HepG2 (cell line): ENCODE measurements at regions of chr12 and their contacts with region 1.

Region 1: GRCh38 chr12:7638760-7639555 is 26.8 kb downstream of the APOBEC1 start:
- DNase-seq: peak; percentile 73
- ATAC-seq: peak; percentile 93
- H3K4me3 ChIP-seq: no peak overlapping the region
- H3K27ac ChIP-seq: no peak overlapping the region
- H3K4me1 ChIP-seq: peaks cover 26% of the 10 kb centered on the region
- H3K27me3 ChIP-seq: peaks cover 0 to 8% of the 10 kb centered on the region in 2 experiments; a peak in 2 of 5 replicates
- CTCF ChIP-seq: peak; percentile 88
- EP300 ChIP-seq: no peak
- POLR2A ChIP-seq: no peak
- RAD21 ChIP-seq: peak; percentile 85

Region 2: DNA sequence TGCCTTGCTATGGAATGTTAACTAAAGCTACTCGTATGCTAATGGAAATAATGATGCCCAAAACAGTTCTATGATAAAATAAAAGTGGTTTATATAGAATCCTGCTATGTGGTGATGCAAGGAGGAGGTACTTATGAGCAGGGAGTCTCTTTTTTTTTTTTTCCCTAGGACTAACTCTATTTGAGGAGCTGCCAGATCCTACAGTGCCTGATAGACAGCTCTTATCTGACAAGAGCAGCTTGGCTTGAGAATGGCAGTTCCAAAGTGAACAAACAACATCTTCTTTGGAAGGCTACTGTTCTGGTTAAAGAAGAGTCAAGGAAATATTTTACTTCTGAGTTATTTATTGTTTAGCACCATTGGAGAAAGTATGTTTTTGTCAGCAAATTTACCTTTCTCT is 345.3 kb before region 1 on chr12:
- CTCF ChIA-PET with region 1: no interaction called
- POLR2A ChIA-PET with region 1: no interaction called
- in situ Hi-C with region 1: no loop called
- intact Hi-C with region 1: no loop called
- DNase-seq: no peak
- ATAC-seq: no peak
- H3K4me3 ChIP-seq: no peak overlapping the region
- H3K27ac ChIP-seq: no peak overlapping the region
- H3K4me1 ChIP-seq: no peaks in the 10 kb centered on the region
- H3K27me3 ChIP-seq: peaks cover 0 to 9% of the 10 kb centered on the region in 2 experiments; a peak in 1 of 5 replicates
- CTCF ChIP-seq: no peak
- EP300 ChIP-seq: no peak
- POLR2A ChIP-seq: no peak
- RAD21 ChIP-seq: no peak

Region 3: GRCh38 chr12:7374423-7375144 is 264.4 kb before region 1 on chr12:
- CTCF ChIA-PET with region 1: interaction called, 7 read pairs
- POLR2A ChIA-PET with region 1: no interaction called
- in situ Hi-C with region 1: loop called (anchors 10 kb)
- intact Hi-C with region 1: loop called (anchors 1 kb)
- DNase-seq: peak; percentile 80
- ATAC-seq: peak; percentile 99
- H3K4me3 ChIP-seq: no peak overlapping the region
- H3K27ac ChIP-seq: no peak overlapping the region
- H3K4me1 ChIP-seq: peaks cover 13% of the 10 kb centered on the region
- H3K27me3 ChIP-seq: no peaks in the 10 kb centered on the region; a peak in 1 of 5 replicates
- CTCF ChIP-seq: peak; percentile 93
- EP300 ChIP-seq: no peak
- POLR2A ChIP-seq: no peak
- RAD21 ChIP-seq: peak; percentile 62

Region 4: GRCh38 chr12:7460375-7461259 is 178.3 kb before region 1 on chr12:
- CTCF ChIA-PET with region 1: interaction called, 3 read pairs
- POLR2A ChIA-PET with region 1: no interaction called
- in situ Hi-C with region 1: no loop called
- intact Hi-C with region 1: loop called (anchors 5 kb)
- DNase-seq: peak; percentile 46
- ATAC-seq: peak; percentile 91
- H3K4me3 ChIP-seq: no peak overlapping the region
- H3K27ac ChIP-seq: no peak overlapping the region
- H3K4me1 ChIP-seq: no peaks in the 10 kb centered on the region
- H3K27me3 ChIP-seq: no peaks in the 10 kb centered on the region
- CTCF ChIP-seq: peak; percentile 86
- EP300 ChIP-seq: no peak
- POLR2A ChIP-seq: no peak
- RAD21 ChIP-seq: peak; percentile 69

Region 5: GRCh38 chr12:7583571-7583970 is 55.4 kb before region 1 on chr12:
- CTCF ChIA-PET with region 1: interaction called, 14 read pairs
- POLR2A ChIA-PET with region 1: no interaction called
- in situ Hi-C with region 1: no loop called
- intact Hi-C with region 1: loop called (anchors 1 kb)
- DNase-seq: no peak
- ATAC-seq: no peak
- H3K4me3 ChIP-seq: no peak overlapping the region
- H3K27ac ChIP-seq: no peak overlapping the region
- H3K4me1 ChIP-seq: no peaks in the 10 kb centered on the region
- H3K27me3 ChIP-seq: no peaks in the 10 kb centered on the region
- CTCF ChIP-seq: no peak
- EP300 ChIP-seq: no peak
- POLR2A ChIP-seq: no peak
- RAD21 ChIP-seq: no peak